Activated CD4-positive, alpha-beta memory T cell treated with anti-CD3 and anti-CD28 coated beads for 36 hours (primary cell): ENCODE measurements at regions of chr19 and their contacts with region 1.

Region 1: GRCh38 chr19:16076154-16076957 is at the start of gene TPM4:
- DNase-seq: peak; percentile 95
- H3K4me3 Mint-ChIP-seq: peak within 1 kb of the TSS; percentile 97
- H3K27ac Mint-ChIP-seq: peak within 1 kb of the TSS; percentile 97
- H3K4me1 Mint-ChIP-seq: peaks cover 56% of the 10 kb centered on the region
- H3K27me3 Mint-ChIP-seq: no peaks in the 10 kb centered on the region
- total RNA-seq, gene TPM4: 497 to 515 TPM

Region 2: DNA sequence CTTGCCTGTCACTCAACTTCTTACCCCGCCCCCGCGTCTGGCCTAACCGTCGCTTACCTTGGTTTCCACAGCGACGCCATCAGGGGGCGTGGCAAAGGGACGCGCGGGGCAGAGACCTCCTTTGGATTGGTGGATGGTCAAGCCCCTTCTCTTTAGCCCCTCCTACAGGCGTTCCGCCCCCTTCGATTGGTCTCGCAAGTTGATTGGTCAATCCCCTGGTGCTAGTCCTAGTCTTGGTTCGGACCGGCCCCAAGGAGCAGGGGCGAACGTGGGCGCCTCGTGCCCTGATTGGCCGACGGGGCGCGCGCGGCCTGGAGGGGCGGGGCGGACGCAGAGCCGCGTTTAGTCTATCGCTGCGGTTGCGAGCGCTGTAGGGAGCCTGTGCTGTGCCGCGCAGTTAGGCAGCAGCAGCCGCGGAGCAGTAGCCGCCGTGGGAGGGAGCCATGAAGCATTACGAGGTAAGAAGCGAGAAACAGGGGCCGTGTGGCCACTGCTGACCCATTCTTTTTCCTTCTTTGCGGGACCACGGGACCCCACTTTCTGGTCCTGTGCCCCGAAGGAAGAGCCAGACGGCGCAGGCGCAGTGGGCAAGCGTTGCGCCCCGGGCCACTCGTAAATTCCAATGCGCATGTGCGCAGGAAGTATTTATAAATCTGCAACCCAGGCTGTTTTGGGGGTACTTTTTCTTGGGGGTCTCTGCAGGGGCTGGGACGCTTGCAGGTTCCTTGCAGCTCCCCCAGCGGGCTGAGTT is 1546.9 kb before region 1 on chr19 and contains the start of gene TECR:
- CTCF ChIA-PET with region 1: no interaction called
- POLR2A ChIA-PET with region 1: no interaction called
- intact Hi-C with region 1: loop called (anchors 10 kb)
- DNase-seq: peak; percentile 100
- H3K4me3 Mint-ChIP-seq: peak within 1 kb of the TSS; percentile 98
- H3K27ac Mint-ChIP-seq: peak within 1 kb of the TSS; percentile 95
- H3K4me1 Mint-ChIP-seq: peaks cover 33% of the 10 kb centered on the region
- H3K27me3 Mint-ChIP-seq: no peaks in the 10 kb centered on the region
- total RNA-seq, gene TECR: 120 TPM

Region 3: GRCh38 chr19:15836595-15837337 is 239.6 kb before region 1 on chr19:
- CTCF ChIA-PET with region 1: no interaction called
- POLR2A ChIA-PET with region 1: no interaction called
- intact Hi-C with region 1: loop called (anchors 5 kb)
- DNase-seq: peak; percentile 97
- H3K4me3 Mint-ChIP-seq: peak overlapping the region; percentile 83
- H3K27ac Mint-ChIP-seq: peak overlapping the region; percentile 95
- H3K4me1 Mint-ChIP-seq: peaks cover 21% of the 10 kb centered on the region
- H3K27me3 Mint-ChIP-seq: no peaks in the 10 kb centered on the region

Region 4: GRCh38 chr19:16088351-16089009 is 12.1 kb after region 1 on chr19:
- CTCF ChIA-PET with region 1: interaction called, 8 read pairs
- POLR2A ChIA-PET with region 1: interaction called, 29 read pairs
- intact Hi-C with region 1: loop called (anchors 1 kb)
- DNase-seq: no peak
- H3K4me3 Mint-ChIP-seq: no peak overlapping the region
- H3K27ac Mint-ChIP-seq: peak overlapping the region; percentile 56
- H3K4me1 Mint-ChIP-seq: peaks cover 51% of the 10 kb centered on the region
- H3K27me3 Mint-ChIP-seq: no peaks in the 10 kb centered on the region

Region 5: DNA sequence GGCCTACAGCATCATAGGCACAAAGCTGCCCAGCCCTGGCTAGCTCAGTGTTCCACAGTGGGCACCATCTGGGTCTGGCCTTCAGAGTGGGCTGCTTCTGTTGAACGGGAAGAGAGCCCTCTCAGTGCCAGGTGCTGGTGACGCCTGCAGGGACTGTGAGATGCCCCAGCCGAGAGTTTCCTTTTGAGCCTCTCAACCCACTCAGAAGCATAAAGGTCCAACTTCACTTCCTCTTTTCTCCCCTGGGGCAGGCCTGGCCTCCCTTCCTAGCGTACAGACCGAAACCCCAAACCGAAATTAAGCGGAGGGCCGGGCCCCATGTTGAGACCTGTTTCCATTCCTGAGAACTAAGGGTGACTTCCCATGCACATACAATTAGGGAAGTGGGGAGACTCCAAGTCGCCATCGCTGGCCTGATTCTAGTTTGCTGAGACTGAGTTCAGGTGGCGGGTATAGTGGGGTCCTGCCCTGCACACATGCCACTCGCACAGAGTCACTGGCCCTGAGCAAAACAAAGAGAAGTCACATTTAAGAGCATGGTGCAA is 42.2 kb after region 1 on chr19:
- CTCF ChIA-PET with region 1: interaction called, 3 read pairs
- POLR2A ChIA-PET with region 1: interaction called, 12 read pairs
- intact Hi-C with region 1: loop called (anchors 1 kb)
- DNase-seq: peak; percentile 84
- H3K4me3 Mint-ChIP-seq: peak overlapping the region; percentile 55
- H3K27ac Mint-ChIP-seq: peak overlapping the region; percentile 97
- H3K4me1 Mint-ChIP-seq: peaks cover 79% of the 10 kb centered on the region
- H3K27me3 Mint-ChIP-seq: no peaks in the 10 kb centered on the region